PC-3 (cell line): ENCODE measurements at regions of chr19 and their contacts with region 1.

Region 1: GRCh38 chr19:32224371-32225244 is 120.8 kb upstream of the ZNF507 start:
- DNase-seq: peak; percentile 47
- ATAC-seq: peak; percentile 42; the same call in 1 of the 2 replicates
- H3K4me3 ChIP-seq: no peak overlapping the region
- H3K27ac ChIP-seq: no peak overlapping the region
- H3K4me1 ChIP-seq: no peaks in the 10 kb centered on the region
- H3K27me3 ChIP-seq: no peaks in the 10 kb centered on the region; the same call in 1 of the 2 replicates
- CTCF ChIP-seq: peak; percentile 86

Region 2: GRCh38 chr19:30669329-30670010 is 1555.1 kb before region 1 on chr19:
- CTCF ChIA-PET with region 1: no interaction called
- POLR2A ChIA-PET with region 1: no interaction called
- intact Hi-C with region 1: loop called (anchors 5 kb)
- DNase-seq: peak; percentile 39
- ATAC-seq: peak; percentile 43; the same call in 1 of the 2 replicates
- H3K4me3 ChIP-seq: no peak overlapping the region
- H3K27ac ChIP-seq: no peak overlapping the region
- H3K4me1 ChIP-seq: no peaks in the 10 kb centered on the region
- H3K27me3 ChIP-seq: peaks cover 11% of the 10 kb centered on the region; the same call in 1 of the 2 replicates
- CTCF ChIP-seq: peak; percentile 83

Region 3: GRCh38 chr19:30682999-30683536 is 1541.5 kb before region 1 on chr19:
- CTCF ChIA-PET with region 1: no interaction called
- POLR2A ChIA-PET with region 1: no interaction called
- intact Hi-C with region 1: loop called (anchors 2 kb)
- DNase-seq: peak; percentile 70
- ATAC-seq: peak; percentile 62
- H3K4me3 ChIP-seq: no peak overlapping the region
- H3K27ac ChIP-seq: no peak overlapping the region
- H3K4me1 ChIP-seq: 0 out of 2 replicates have a peak, but pooled peaks cover 3% of the 10 kb centered on the region
- H3K27me3 ChIP-seq: 0 out of 2 replicates have a peak, but pooled peaks cover 1% of the 10 kb centered on the region
- CTCF ChIP-seq: peak; percentile 84

Region 4: GRCh38 chr19:31890218-31890617 is 334.4 kb before region 1 on chr19:
- CTCF ChIA-PET with region 1: no interaction called
- POLR2A ChIA-PET with region 1: no interaction called
- intact Hi-C with region 1: no loop called
- DNase-seq: no peak
- ATAC-seq: no peak
- H3K4me3 ChIP-seq: no peak overlapping the region
- H3K27ac ChIP-seq: no peak overlapping the region
- H3K4me1 ChIP-seq: no peaks in the 10 kb centered on the region
- H3K27me3 ChIP-seq: no peaks in the 10 kb centered on the region
- CTCF ChIP-seq: no peak

Region 5: DNA sequence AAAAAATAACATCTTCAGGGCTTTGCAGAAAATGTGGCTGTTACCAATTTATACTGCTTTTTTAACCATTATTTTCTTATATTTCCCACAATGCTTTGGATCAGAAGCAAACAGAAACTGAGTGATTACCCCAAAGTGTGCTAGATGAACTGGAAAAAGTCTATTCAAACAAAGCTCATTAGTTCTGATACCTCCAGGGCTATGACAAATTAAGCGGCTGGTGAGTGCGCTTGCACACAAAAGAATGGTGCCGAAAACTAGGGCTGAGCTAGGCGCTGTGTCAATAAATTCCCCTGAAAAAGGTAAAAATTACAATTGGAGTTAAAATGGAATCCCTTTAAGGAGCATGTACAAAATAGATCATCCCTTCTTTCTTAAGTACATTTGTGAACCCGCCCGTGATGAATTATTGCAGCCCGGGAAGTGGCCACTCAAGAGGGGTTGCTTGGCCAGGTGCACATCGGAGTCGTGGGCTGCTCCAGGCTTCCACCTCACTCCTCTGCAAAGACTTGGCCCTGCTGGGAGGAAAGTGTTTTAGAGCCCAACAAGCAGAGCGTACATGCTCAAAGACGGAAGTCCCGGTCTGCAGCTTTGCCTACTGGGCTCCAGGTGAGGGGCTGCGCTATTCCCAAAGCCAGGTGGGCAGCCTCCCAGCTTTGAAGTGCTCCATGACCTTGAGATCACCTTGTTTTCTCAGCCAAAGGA is 43.2 kb before region 1 on chr19:
- CTCF ChIA-PET with region 1: no interaction called
- POLR2A ChIA-PET with region 1: no interaction called
- intact Hi-C with region 1: no loop called
- DNase-seq: no peak
- ATAC-seq: no peak
- H3K4me3 ChIP-seq: no peak overlapping the region
- H3K27ac ChIP-seq: no peak overlapping the region
- H3K4me1 ChIP-seq: no peaks in the 10 kb centered on the region
- H3K27me3 ChIP-seq: no peaks in the 10 kb centered on the region
- CTCF ChIP-seq: no peak

Region 6: GRCh38 chr19:32251634-32252332 is 27.2 kb after region 1 on chr19:
- CTCF ChIA-PET with region 1: no interaction called
- POLR2A ChIA-PET with region 1: no interaction called
- intact Hi-C with region 1: no loop called
- DNase-seq: no peak
- ATAC-seq: no peak
- H3K4me3 ChIP-seq: no peak overlapping the region
- H3K27ac ChIP-seq: no peak overlapping the region
- H3K4me1 ChIP-seq: no peaks in the 10 kb centered on the region
- H3K27me3 ChIP-seq: peaks cover 3% of the 10 kb centered on the region; the same call in 1 of the 2 replicates
- CTCF ChIP-seq: no peak

Region 7: DNA sequence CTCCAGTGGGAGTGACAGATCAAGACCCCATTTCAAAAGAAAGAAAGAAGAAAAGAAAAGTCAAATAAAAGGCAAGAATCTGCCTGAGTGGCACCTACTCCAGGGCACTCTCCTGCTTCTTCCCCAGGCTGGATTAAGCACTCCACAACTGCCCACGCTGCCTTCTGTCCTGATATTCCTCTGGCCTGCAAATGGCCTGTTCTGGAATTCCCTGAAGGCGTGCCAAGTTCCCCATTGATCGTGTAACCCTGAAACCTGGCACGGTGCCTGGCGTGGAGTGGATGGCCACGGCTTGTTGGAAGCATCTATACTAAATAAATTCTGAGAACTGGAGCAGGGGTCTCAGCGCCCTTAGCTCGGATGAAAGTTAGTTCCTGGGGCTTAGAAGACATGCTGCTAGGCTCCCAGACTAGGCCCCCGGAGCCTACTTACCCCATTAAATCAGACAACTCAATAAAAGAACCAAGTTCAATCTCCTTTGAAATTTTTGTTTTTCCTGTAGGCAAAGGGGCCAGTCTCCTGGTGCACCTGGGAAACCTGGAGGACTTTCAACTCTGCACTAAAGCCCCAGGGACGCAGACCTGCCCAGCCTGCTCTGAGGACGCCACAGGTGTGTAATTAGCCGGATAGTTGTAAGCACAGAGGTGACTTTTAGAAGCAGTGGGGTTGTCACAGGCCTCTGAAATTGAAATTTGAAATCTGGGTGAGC is 428.4 kb after region 1 on chr19:
- CTCF ChIA-PET with region 1: no interaction called
- POLR2A ChIA-PET with region 1: no interaction called
- intact Hi-C with region 1: no loop called
- DNase-seq: no peak
- ATAC-seq: no peak
- H3K4me3 ChIP-seq: no peak overlapping the region
- H3K27ac ChIP-seq: no peak overlapping the region
- H3K4me1 ChIP-seq: no peaks in the 10 kb centered on the region
- H3K27me3 ChIP-seq: no peaks in the 10 kb centered on the region
- CTCF ChIP-seq: no peak